HCT116 (cell line): ENCODE measurements at regions of chr13 and their contacts with region 1.

Region 1: GRCh38 chr13:110455941-110456340 is 105.6 kb downstream of the RAB20 start:
- DNase-seq: peak; percentile 81
- ATAC-seq: peak; percentile 98
- H3K4me3 ChIP-seq: peak overlapping the region; percentile 4 to 18; a peak in 1 of 4 replicates
- H3K27ac ChIP-seq: no peak overlapping the region
- H3K4me1 ChIP-seq: peaks cover 0 to 17% of the 10 kb centered on the region in 2 experiments; a peak in 3 of 4 replicates
- H3K27me3 ChIP-seq: no peaks in the 10 kb centered on the region
- CTCF ChIP-seq: peak; percentile 92 to 94 (median 93)
- POLR2A ChIP-seq: no peak
- RAD21 ChIP-seq: peak; percentile 96

Region 2: GRCh38 chr13:110506859-110507566 is 51.1 kb after region 1 on chr13:
- CTCF ChIA-PET with region 1: no interaction called
- POLR2A ChIA-PET with region 1: no interaction called
- RAD21 ChIA-PET with region 1: no interaction called
- intact Hi-C with region 1: no loop called
- DNase-seq: no peak
- ATAC-seq: peak; percentile 18
- H3K4me3 ChIP-seq: 0 out of 4 replicates have a peak overlapping the region, but pooled peaks of 1 of the 2 experiments have one; percentile 4
- H3K27ac ChIP-seq: no peak overlapping the region
- H3K4me1 ChIP-seq: peaks cover 11 to 27% of the 10 kb centered on the region in 2 experiments
- H3K27me3 ChIP-seq: no peaks in the 10 kb centered on the region
- CTCF ChIP-seq: no peak
- POLR2A ChIP-seq: no peak
- RAD21 ChIP-seq: no peak

Region 3: GRCh38 chr13:110593430-110594130 is 137.6 kb after region 1 on chr13:
- CTCF ChIA-PET with region 1: interaction called, 6 read pairs
- POLR2A ChIA-PET with region 1: no interaction called
- RAD21 ChIA-PET with region 1: interaction called in 1 of 2 experiments, 4 read pairs
- intact Hi-C with region 1: loop called (anchors 10 kb)
- DNase-seq: peak; percentile 50
- ATAC-seq: peak; percentile 93
- H3K4me3 ChIP-seq: no peak overlapping the region
- H3K27ac ChIP-seq: no peak overlapping the region
- H3K4me1 ChIP-seq: peaks cover 2 to 5% of the 10 kb centered on the region in 2 experiments; a peak in 2 of 4 replicates
- H3K27me3 ChIP-seq: no peaks in the 10 kb centered on the region
- CTCF ChIP-seq: peak; percentile 48 to 72 (median 70); a peak in 5 of 6 replicates
- POLR2A ChIP-seq: no peak
- RAD21 ChIP-seq: peak; percentile 81